ENCODE measurements at regions of chr11 and their contacts with region 1.

Region 1: GRCh38 chr11:127074151-127074761 is 73.7 kb upstream of the KIRREL3 start:
- DNase-seq: peak; percentile 76
- ATAC-seq: peak; percentile 97
- H3K4me3 ChIP-seq: no peak overlapping the region
- H3K27ac ChIP-seq: no peak overlapping the region
- H3K4me1 ChIP-seq: peaks cover 12% of the 10 kb centered on the region
- H3K27me3 ChIP-seq: no peaks in the 10 kb centered on the region; a peak in 2 of 4 replicates
- CTCF ChIP-seq: peak; percentile 60 to 82 (median 64)
- EP300 ChIP-seq: peak; percentile 64 to 65
- POLR2A ChIP-seq: no peak
- RAD21 ChIP-seq: peak; percentile 75

Region 2: GRCh38 chr11:126989942-126990715 is 84.1 kb before region 1 on chr11:
- CTCF ChIA-PET with region 1: interaction called, 12 read pairs
- POLR2A ChIA-PET with region 1: no interaction called
- RAD21 ChIA-PET with region 1: interaction called, 10 read pairs
- SMC1A ChIA-PET with region 1: interaction called, 7 read pairs
- in situ Hi-C with region 1: no loop called
- intact Hi-C with region 1: no loop called
- DNase-seq: no peak
- ATAC-seq: peak; percentile 98
- H3K4me3 ChIP-seq: no peak overlapping the region
- H3K27ac ChIP-seq: no peak overlapping the region
- H3K4me1 ChIP-seq: no peaks in the 10 kb centered on the region
- H3K27me3 ChIP-seq: peaks cover 0 to 12% of the 10 kb centered on the region in 2 experiments; a peak in 3 of 4 replicates
- CTCF ChIP-seq: peak; percentile 94 to 98 (median 94)
- EP300 ChIP-seq: no peak
- POLR2A ChIP-seq: no peak
- RAD21 ChIP-seq: peak; percentile 90

Region 3: GRCh38 chr11:127003260-127003981 is 70.8 kb before region 1 on chr11:
- CTCF ChIA-PET with region 1: interaction called, 5 read pairs
- POLR2A ChIA-PET with region 1: no interaction called
- RAD21 ChIA-PET with region 1: no interaction called
- SMC1A ChIA-PET with region 1: no interaction called
- in situ Hi-C with region 1: no loop called
- intact Hi-C with region 1: loop called (anchors 2 kb)
- DNase-seq: no peak
- ATAC-seq: peak; percentile 81
- H3K4me3 ChIP-seq: no peak overlapping the region
- H3K27ac ChIP-seq: no peak overlapping the region
- H3K4me1 ChIP-seq: no peaks in the 10 kb centered on the region
- H3K27me3 ChIP-seq: peaks cover 18 to 36% of the 10 kb centered on the region in 2 experiments
- CTCF ChIP-seq: peak; percentile 16 to 20 (median 17); a peak in 2 of 6 replicates
- EP300 ChIP-seq: no peak
- POLR2A ChIP-seq: no peak
- RAD21 ChIP-seq: no peak